ENCODE measurements at regions of chr2 and their contacts with region 1.

Region 1: GRCh38 chr2:8693155-8693821 is 11.4 kb downstream of the ID2 start:
- DNase-seq: peak in 3 of 5 donors; percentile 22 to 66 (median 48)
- ATAC-seq: peak; percentile 37 to 83 (median 82)
- H3K4me3 ChIP-seq: peak overlapping the region in 7 of 12 donors; percentile 13 to 35 (median 30)
- H3K27ac ChIP-seq: no peak overlapping the region
- H3K4me1 ChIP-seq: peaks cover 0 to 9% (median 0%) of the 10 kb centered on the region in 12 donors
- H3K27me3 ChIP-seq: peaks cover 0 to 8% (median 0%) of the 10 kb centered on the region in 9 donors
- CTCF ChIP-seq: peak; percentile 48 to 76 (median 64)
- POLR2A ChIP-seq: no peak

Region 2: GRCh38 chr2:7203055-7203467 is 1490.2 kb before region 1 on chr2:
- intact Hi-C with region 1: loop called in 8 of 10 experiments (anchors 5 kb)
- DNase-seq: peak in 2 of 5 donors; percentile 19 to 33
- ATAC-seq: peak in 2 of 4 donors; percentile 45 to 53
- H3K4me3 ChIP-seq: no peak overlapping the region
- H3K27ac ChIP-seq: no peak overlapping the region
- H3K4me1 ChIP-seq: no peaks in the 10 kb centered on the region
- H3K27me3 ChIP-seq: no peaks in the 10 kb centered on the region
- CTCF ChIP-seq: peak; percentile 75 to 96 (median 86)
- POLR2A ChIP-seq: no peak

Region 3: GRCh38 chr2:7736646-7737305 is 956.5 kb before region 1 on chr2:
- intact Hi-C with region 1: loop called in 1 of 10 experiments (anchors 10 kb)
- DNase-seq: no peak
- ATAC-seq: no peak
- H3K4me3 ChIP-seq: no peak overlapping the region
- H3K27ac ChIP-seq: no peak overlapping the region
- H3K4me1 ChIP-seq: no peaks in the 10 kb centered on the region
- H3K27me3 ChIP-seq: peaks cover 0 to 3% (median 0%) of the 10 kb centered on the region in 9 donors
- CTCF ChIP-seq: no peak
- POLR2A ChIP-seq: no peak

Region 4: DNA sequence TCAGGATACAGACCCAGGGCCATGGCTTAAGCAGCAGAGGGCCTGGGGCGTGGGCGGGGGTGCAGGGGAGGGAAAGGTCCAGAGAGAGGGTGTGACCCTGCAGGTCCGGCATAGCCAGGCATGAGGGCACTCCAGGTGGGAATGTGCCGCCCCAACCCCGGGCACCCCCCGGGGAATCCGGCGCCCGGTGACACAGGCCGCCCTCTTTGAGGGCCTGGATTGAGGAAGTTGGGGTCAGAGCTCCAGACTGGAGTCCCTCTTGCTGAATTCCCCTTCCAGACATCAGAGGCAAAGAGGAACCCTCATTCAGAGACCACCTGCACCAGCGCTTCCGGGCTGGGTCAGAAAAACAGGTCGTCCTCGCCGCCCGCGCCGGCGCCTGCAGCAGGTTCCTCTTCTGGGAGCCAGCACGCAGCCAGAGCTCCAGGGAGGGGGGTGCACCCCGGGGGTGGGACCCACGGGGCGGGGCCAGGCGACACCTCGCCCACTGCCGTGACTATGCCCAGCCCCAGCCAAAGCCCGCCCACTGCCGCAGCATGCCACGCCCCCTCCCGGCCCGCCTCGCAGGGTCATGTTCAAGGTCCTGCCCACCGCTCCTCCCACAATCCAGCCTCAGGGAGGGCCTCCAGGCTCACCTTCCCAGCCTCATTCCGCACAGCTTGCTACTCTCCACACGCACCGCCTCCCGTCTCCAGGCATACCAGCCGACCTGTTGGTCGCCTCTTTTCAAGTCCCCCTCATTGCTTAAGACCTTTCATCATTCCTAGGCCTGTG is 109.7 kb before region 1 on chr2:
- intact Hi-C with region 1: no loop called
- DNase-seq: peak; percentile 90 to 97 (median 94)
- ATAC-seq: peak; percentile 96 to 98 (median 98)
- H3K4me3 ChIP-seq: peak overlapping the region in 8 of 12 donors; percentile 2 to 31 (median 17)
- H3K27ac ChIP-seq: peak overlapping the region in 11 of 12 donors; percentile 6 to 75 (median 65)
- H3K4me1 ChIP-seq: peaks cover 0 to 34% (median 8%) of the 10 kb centered on the region in 12 donors
- H3K27me3 ChIP-seq: no peaks in the 10 kb centered on the region
- CTCF ChIP-seq: no peak
- POLR2A ChIP-seq: no peak

Region 5: DNA sequence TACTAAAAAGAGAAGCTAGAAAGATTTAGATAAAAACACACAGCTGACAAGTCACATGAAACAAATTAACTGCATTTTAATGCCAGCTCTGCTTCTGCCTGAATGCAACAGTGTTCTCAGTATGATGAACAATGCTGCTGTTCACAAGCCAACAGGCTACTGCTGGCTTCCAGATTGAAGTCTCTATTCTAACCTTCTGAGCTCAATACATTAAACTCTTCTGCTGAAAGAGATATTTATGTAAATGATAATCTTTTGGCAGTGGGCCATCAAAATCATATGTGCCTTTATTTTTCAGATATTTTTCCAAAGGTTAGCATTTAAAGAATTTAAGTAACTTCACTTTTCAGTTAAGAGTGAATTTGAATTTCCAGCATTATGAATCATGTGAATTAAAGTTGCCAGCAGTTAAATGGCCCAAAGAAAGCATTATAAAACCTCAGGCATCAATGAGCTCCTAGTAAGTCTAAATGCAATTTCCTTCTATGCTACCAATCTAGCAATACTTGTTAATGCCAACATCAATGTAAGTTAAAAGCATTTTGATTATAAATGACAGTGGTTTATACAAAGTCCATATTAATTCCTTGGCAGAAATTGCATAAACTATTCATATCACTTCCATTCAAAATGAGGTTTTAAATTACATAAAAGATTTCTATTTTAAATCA is 61.0 kb after region 1 on chr2:
- intact Hi-C with region 1: loop called in 1 of 10 experiments (anchors 10 kb)
- DNase-seq: no peak
- ATAC-seq: peak; percentile 46 to 74 (median 70)
- H3K4me3 ChIP-seq: no peak overlapping the region
- H3K27ac ChIP-seq: peak overlapping the region in 1 of 12 donors; percentile 4
- H3K4me1 ChIP-seq: peaks cover 0 to 20% (median 11%) of the 10 kb centered on the region in 12 donors
- H3K27me3 ChIP-seq: no peaks in the 10 kb centered on the region
- CTCF ChIP-seq: no peak
- POLR2A ChIP-seq: no peak